Activated CD4-positive, alpha-beta T cell treated with anti-CD3 and anti-CD28 coated beads, Interleukin-2, amount 10 ng/mL, durations not matched to agents 24 days and 14 days (primary cell): ENCODE measurements at regions of chr18 and their contacts with region 1.

Region 1: GRCh38 chr18:63848159-63848558 is 39.3 kb upstream of the SERPINB2 start:
- DNase-seq: no peak
- H3K4me3 Mint-ChIP-seq: no peak overlapping the region
- H3K27ac Mint-ChIP-seq: no peak overlapping the region
- H3K4me1 Mint-ChIP-seq: no peaks in the 10 kb centered on the region
- H3K27me3 Mint-ChIP-seq: peaks cover 33% of the 10 kb centered on the region

Region 2: DNA sequence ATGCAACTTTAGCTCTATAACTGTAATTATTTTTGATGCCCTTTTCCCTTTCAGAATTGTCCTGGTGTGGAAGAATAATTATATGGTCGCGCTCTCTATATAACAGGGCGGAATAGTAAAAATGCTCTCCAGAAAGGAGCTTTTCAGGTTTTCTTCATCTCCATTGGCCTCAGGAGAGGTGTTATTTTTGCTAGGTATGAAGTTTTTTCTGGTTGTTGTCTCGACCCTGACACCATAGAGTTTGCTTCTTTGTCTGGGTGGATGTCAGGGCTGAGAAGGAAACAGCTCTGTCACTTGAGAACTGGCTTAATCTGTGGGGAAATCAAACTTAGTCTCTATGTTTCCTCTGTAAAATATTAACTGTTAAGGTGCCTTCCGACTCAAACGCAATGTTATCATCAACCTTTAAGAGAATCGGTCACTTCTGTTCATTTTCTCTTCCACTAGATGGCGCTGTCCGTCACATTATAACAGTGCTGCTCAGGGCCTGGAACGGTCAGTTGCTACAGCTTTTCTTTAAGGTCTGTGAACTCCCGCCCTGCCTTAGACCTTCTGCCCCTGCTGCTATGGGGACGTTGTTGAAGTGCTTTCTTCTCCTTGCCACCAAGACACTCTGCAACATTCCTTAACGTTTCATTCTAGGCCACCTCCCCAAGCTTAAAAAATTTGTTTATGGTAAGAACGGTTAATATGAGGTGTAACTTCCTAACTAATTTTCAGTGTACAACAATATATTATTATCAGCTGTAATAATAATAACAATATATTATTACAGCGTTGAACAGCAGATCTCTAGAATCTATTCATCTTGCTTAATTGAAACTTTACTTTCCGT is 329.8 kb before region 1 on chr18:
- intact Hi-C with region 1: loop called (anchors 1 kb)
- DNase-seq: peak; percentile 88
- H3K4me3 Mint-ChIP-seq: no peak overlapping the region
- H3K27ac Mint-ChIP-seq: no peak overlapping the region
- H3K4me1 Mint-ChIP-seq: no peaks in the 10 kb centered on the region
- H3K27me3 Mint-ChIP-seq: peaks cover 34% of the 10 kb centered on the region

Region 3: DNA sequence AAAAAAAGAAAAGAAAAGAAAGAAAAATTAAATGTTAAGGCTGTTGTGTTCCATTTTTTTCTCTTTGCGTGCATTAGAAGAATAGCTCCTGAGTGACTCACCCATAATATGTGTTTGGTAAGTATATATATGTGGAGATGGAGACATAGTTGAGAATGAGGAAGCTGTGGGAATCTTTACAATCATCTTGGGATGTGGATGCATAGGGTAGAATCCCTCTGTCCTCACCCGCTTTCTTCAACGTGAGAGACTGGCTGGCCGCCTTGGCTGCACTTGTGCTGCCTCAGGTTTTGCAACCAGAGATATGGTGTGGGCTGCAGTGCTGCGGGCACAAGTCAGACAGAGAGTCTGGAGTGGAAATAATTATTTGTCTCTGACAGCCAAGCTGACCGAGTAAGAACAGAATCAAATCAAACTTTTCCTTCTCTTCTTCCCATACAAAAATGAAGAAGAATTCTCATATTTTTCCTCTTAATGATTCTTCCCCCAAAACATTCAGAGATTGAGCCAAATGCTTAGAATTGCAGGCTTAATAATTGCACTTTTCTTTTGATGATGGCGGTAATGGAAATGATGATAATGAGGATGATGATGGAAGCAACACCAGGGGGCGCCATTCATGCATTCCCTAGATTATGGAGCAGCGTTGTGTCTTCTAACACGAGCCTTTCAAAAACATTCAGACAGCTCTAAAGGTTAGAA is 24.5 kb before region 1 on chr18:
- intact Hi-C with region 1: loop called (anchors 1 kb)
- DNase-seq: peak; percentile 77
- H3K4me3 Mint-ChIP-seq: no peak overlapping the region
- H3K27ac Mint-ChIP-seq: no peak overlapping the region
- H3K4me1 Mint-ChIP-seq: no peaks in the 10 kb centered on the region
- H3K27me3 Mint-ChIP-seq: peaks cover 12% of the 10 kb centered on the region